A549 (cell line): ENCODE measurements at regions of chr2 and their contacts with region 1.

Region 1: DNA sequence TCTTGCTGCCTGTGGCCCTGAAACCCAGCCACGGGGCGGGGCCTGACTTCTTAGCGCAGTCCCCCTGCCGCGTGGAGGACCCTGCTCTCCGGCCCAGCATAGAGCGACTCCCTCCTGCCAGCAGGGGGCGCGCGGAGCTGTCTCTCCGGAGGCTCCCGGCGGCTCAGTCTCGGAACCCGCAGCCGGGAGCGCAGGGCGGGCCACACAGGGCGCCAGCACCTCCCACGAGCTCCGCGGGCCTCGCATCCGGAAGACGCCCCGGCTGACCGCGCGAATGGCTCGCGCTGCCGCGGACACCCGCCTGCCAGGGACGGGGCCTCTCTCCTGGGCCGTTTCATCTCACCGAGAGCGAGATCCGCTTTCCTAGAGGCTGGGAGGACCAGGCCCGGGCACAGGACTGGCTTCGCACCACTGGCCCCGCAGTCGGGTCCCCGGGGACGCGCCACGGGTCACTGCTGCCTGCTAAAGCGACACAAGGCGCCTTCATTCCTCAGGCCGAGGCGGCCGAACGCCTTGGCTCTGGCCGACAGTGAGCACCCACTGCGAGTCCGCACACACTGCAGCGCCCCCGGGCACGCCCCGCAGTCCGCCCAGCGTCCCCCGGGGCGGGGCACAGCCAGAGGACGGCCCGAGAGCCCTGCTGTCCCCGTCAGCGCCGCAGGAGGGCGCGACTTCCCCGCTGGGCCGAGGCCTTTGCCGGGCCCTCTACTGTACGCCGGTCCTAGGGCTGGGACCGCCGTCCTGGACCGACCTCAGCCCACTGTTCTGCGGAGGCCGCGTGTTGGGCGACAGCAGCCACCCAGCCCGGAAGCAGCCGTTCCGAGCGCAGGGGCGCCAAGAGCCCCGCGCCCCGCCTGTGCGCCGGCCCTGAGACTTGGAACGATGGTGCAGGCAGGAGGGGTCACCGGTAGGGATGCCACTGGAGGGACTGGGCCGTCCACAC is 39.0 kb upstream of the ARHGEF4 start:
- DNase-seq: peak; percentile 81 to 83
- ATAC-seq: peak; percentile 92 to 97
- H3K4me3 ChIP-seq: peak overlapping the region; percentile 66
- H3K27ac ChIP-seq: peak overlapping the region; percentile 84 to 95
- H3K4me1 ChIP-seq: peaks cover 4% of the 10 kb centered on the region; the same call in 1 of the 3 replicates
- CTCF ChIP-seq: peak; percentile 87
- EP300 ChIP-seq: no peak
- POLR2A ChIP-seq: peak; percentile 82
- RAD21 ChIP-seq: peak; percentile 84 to 93

Region 2: GRCh38 chr2:130785466-130786055 is 12.2 kb before region 1 on chr2:
- CTCF ChIA-PET with region 1: interaction called, 18 read pairs
- POLR2A ChIA-PET with region 1: no interaction called
- DNase-seq: no peak
- ATAC-seq: no peak
- H3K4me3 ChIP-seq: no peak overlapping the region
- H3K27ac ChIP-seq: no peak overlapping the region
- H3K4me1 ChIP-seq: no peaks in the 10 kb centered on the region
- CTCF ChIP-seq: no peak
- EP300 ChIP-seq: no peak
- POLR2A ChIP-seq: no peak
- RAD21 ChIP-seq: no peak

Region 3: DNA sequence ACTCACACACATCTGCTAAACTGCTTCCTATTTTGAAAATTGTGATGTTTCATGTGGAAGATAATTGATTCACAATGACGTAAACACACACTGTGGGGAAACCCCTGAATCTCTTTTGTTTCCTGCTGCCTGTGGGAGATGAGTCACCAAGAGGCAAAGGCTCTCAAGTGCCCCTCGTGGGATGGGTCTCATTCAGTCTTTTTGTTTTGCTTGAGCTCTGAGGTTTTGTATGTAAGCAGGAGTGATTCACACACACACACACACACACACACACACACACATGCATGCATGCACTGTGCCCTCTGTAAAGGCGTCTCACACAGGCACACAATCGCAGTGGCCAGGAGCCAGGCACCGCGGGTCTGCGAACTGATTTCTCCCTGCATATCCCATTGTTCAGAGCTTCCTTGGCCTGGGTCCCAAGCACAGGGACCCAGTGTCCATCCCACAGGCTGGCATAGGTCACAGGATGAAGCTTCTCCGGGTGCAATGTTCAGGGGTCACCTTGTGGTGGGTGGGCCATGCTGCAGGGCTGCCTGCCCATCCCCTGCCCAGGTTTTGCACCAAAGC is 26.8 kb after region 1 on chr2:
- CTCF ChIA-PET with region 1: interaction called, 63 read pairs
- POLR2A ChIA-PET with region 1: no interaction called
- DNase-seq: peak; percentile 78 to 83
- ATAC-seq: peak; percentile 38 to 65
- H3K4me3 ChIP-seq: no peak overlapping the region
- H3K27ac ChIP-seq: peak overlapping the region; percentile 37 to 76; a peak in 5 of 6 replicates
- H3K4me1 ChIP-seq: peaks cover 44% of the 10 kb centered on the region
- CTCF ChIP-seq: no peak
- EP300 ChIP-seq: no peak
- POLR2A ChIP-seq: no peak
- RAD21 ChIP-seq: no peak

Region 4: DNA sequence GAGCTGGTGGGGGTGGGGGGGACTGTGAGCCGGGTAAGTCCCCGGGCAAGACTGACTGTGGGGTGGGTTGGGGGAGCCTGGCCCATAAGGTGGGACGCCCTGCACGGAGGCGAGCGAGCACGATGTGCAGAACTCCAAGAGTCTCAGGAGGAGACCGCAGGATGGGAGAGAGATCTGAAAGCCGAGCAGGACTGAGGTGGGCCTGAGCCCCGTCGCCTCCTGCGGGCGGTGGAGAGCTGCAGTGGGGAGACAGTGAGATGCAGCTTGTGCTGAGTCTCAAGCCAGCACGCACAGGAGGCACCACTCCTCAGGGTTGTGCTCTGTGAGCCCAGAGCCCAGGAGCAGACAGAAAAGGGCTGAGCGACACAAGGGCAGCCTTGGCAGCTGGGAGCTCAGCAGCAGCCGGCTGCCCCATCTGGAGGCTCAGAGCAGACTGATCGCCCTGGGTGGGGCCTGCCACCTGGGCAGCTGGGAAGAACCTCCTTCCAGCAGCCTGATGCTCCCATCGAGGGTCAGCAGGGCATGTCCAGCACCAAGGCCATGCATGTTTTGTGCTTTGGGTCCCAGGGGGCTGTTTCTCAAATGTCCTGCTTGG is 54.9 kb after region 1 on chr2:
- CTCF ChIA-PET with region 1: interaction called, 20 read pairs
- POLR2A ChIA-PET with region 1: no interaction called
- DNase-seq: no peak
- ATAC-seq: peak; percentile 19 to 20; a peak in 1 of 6 replicates
- H3K4me3 ChIP-seq: no peak overlapping the region
- H3K27ac ChIP-seq: no peak overlapping the region
- H3K4me1 ChIP-seq: no peaks in the 10 kb centered on the region
- CTCF ChIP-seq: no peak
- EP300 ChIP-seq: no peak
- POLR2A ChIP-seq: no peak
- RAD21 ChIP-seq: no peak

Region 5: DNA sequence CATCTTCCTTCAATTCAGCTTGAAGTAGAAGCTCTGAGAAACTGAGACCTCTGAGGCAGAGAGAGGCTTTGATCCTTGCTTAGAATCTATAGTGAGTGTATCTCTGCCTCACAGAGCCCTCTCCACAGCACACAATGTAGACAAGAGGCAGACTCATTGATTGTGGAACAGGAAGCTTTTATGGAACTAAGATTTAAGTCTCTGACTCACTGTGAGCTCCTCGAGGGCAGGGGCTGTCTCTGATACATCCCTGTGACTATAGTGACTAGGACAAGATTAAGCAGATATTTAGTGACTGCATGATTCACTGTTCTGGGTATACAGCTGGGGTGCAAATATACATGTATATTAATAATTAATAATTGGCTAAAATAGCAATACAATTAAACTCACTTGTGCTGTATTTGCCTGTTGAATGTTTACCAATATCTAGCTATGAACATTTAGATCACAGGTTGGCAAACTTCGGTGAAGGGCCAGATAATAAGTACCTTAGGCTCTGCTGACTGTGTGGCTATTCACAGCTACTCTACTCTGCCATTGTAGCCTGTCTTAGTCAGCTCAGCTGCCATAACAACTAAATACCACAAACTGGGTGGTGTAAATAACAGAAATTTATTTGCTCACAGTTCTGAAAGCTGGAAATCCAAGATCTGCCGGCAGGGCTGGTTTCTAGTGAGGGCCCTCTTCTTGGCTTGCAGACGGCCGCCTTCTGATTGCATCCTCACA is 93.3 kb after region 1 on chr2:
- CTCF ChIA-PET with region 1: interaction called, 17 read pairs
- POLR2A ChIA-PET with region 1: no interaction called
- DNase-seq: no peak
- ATAC-seq: peak; percentile 31 to 47; a peak in 1 of 6 replicates
- H3K4me3 ChIP-seq: no peak overlapping the region
- H3K27ac ChIP-seq: no peak overlapping the region
- H3K4me1 ChIP-seq: no peaks in the 10 kb centered on the region
- CTCF ChIP-seq: no peak
- EP300 ChIP-seq: no peak
- POLR2A ChIP-seq: no peak
- RAD21 ChIP-seq: no peak